CD8-positive, alpha-beta T cell (primary cell): ENCODE measurements at regions of chr13 and their contacts with region 1.

Region 1: DNA sequence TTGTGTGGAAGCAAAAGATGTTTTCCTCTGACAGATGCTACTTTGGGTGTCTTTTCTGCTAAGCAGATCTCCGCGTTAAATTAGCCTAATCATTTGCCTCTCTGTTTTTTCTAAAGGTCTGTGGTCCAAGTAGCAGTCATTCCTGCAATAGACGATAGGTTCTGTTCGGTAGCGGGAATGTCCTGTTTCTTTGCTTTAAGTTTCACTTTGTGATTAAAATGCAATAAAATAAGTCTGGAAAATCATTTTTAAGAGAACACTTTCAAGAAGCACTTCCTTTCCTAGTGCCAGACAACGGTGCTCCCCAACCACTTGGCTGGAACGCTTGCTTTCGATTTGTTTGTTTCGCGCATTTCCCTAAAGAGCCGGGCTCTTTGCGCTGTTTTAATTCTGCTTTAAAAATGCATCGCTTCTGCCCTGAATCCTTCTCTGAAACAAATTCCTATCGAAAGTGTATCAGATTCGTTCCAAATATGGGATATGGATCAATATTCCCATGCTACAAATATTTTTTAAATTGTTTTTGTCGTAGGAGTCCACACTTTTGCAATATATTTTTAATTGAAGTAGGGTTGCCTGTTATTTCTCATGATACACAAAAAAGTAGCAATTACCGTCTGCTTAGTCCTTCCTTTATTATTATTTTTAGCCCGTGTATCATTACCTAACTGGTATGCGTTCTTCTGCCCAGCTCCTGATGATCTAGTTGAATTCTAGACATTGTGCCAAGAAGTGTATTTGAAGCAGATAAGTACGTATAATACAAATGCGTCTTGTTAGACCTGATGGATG is 14.2 kb downstream of the ZIC2 start:
- DNase-seq: no peak
- ATAC-seq: no peak
- H3K4me3 ChIP-seq: no peak overlapping the region
- H3K4me3 Mint-ChIP-seq: no peak overlapping the region
- H3K27ac ChIP-seq: no peak overlapping the region
- H3K27ac Mint-ChIP-seq: no peak overlapping the region
- H3K4me1 ChIP-seq: no peaks in the 10 kb centered on the region
- H3K4me1 Mint-ChIP-seq: peaks cover 4% of the 10 kb centered on the region
- H3K27me3 ChIP-seq: peaks cover 67 to 73% of the 10 kb centered on the region in 2 experiments
- H3K27me3 Mint-ChIP-seq: peaks cover 73% of the 10 kb centered on the region
- CTCF ChIP-seq: no peak

Region 2: DNA sequence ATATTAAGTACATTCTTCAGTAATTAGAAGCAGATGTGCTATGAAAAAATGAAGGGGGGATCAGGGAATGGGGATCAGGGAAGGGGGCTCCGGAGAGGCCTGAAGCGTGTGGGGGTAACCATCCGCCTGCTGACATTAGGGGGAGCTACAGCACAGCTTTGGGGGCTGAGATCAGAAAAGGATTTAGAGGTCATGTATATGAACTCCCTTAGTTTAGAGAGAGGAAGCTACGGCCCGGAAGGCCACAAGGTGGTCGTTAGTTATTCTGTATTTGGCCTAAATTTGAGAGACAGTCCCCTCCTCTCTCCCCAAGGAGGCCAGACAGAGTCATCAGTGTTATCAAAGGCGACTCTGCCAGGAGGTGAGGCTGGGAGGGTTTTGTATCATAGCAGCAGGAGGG is 395.5 kb before region 1 on chr13:
- CTCF ChIA-PET with region 1: no interaction called
- POLR2A ChIA-PET with region 1: no interaction called
- intact Hi-C with region 1: no loop called
- DNase-seq: peak in 3 of 9 experiments; percentile 15 to 56 (median 35)
- ATAC-seq: peak; percentile 67
- H3K4me3 ChIP-seq: no peak overlapping the region
- H3K4me3 Mint-ChIP-seq: no peak overlapping the region
- H3K27ac ChIP-seq: no peak overlapping the region
- H3K27ac Mint-ChIP-seq: peak overlapping the region; percentile 69
- H3K4me1 ChIP-seq: peaks cover 20% of the 10 kb centered on the region
- H3K4me1 Mint-ChIP-seq: peaks cover 29% of the 10 kb centered on the region
- H3K27me3 ChIP-seq: no peaks in the 10 kb centered on the region
- H3K27me3 Mint-ChIP-seq: no peaks in the 10 kb centered on the region
- CTCF ChIP-seq: peak; percentile 29

Region 3: GRCh38 chr13:99959538-99960230 is 36.1 kb before region 1 on chr13:
- CTCF ChIA-PET with region 1: no interaction called
- POLR2A ChIA-PET with region 1: no interaction called
- intact Hi-C with region 1: loop called (anchors 5 kb)
- DNase-seq: peak in 2 of 9 experiments; percentile 49 to 52
- ATAC-seq: peak; percentile 34
- H3K4me3 ChIP-seq: no peak overlapping the region
- H3K4me3 Mint-ChIP-seq: peak overlapping the region; percentile 63
- H3K27ac ChIP-seq: no peak overlapping the region
- H3K27ac Mint-ChIP-seq: no peak overlapping the region
- H3K4me1 ChIP-seq: peaks cover 47% of the 10 kb centered on the region
- H3K4me1 Mint-ChIP-seq: peaks cover 37% of the 10 kb centered on the region
- H3K27me3 ChIP-seq: peaks cover 48 to 57% of the 10 kb centered on the region in 2 experiments
- H3K27me3 Mint-ChIP-seq: peaks cover 87% of the 10 kb centered on the region
- CTCF ChIP-seq: no peak

Region 4: DNA sequence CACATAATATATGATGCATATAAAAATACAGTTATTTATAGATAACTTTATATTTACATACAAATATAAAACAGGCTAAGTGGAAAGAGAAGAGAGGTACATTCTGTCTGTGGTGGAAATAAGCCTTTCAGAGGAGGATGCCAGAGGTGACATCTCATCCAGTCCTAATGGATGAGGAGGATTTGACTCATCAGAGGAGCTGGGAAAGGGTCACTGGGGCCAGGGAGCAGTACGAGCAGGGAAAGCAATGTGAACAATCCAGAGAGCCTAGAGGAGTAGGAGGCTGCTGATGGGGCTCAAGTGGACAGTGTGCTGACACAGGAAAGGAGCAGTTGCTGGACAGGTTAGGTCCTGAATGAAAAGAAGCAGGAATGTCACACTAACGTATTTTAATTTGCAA is 1402.0 kb after region 1 on chr13:
- CTCF ChIA-PET with region 1: no interaction called
- POLR2A ChIA-PET with region 1: no interaction called
- intact Hi-C with region 1: no loop called
- DNase-seq: no peak
- ATAC-seq: no peak
- H3K4me3 ChIP-seq: no peak overlapping the region
- H3K4me3 Mint-ChIP-seq: no peak overlapping the region
- H3K27ac ChIP-seq: no peak overlapping the region
- H3K27ac Mint-ChIP-seq: no peak overlapping the region
- H3K4me1 ChIP-seq: no peaks in the 10 kb centered on the region
- H3K4me1 Mint-ChIP-seq: no peaks in the 10 kb centered on the region
- H3K27me3 ChIP-seq: no peaks in the 10 kb centered on the region
- H3K27me3 Mint-ChIP-seq: no peaks in the 10 kb centered on the region
- CTCF ChIP-seq: no peak